Cardiac septum (tissue), 1 donor: ENCODE measurements at regions of chr2 and their contacts with region 1.

Region 1: GRCh38 chr2:26244309-26245121 is at the starts of genes HADHA and HADHB:
- DNase-seq: peak; percentile 95
- total RNA-seq, gene HADHA: 244 TPM
- total RNA-seq, gene HADHB: 532 TPM

Region 2: DNA sequence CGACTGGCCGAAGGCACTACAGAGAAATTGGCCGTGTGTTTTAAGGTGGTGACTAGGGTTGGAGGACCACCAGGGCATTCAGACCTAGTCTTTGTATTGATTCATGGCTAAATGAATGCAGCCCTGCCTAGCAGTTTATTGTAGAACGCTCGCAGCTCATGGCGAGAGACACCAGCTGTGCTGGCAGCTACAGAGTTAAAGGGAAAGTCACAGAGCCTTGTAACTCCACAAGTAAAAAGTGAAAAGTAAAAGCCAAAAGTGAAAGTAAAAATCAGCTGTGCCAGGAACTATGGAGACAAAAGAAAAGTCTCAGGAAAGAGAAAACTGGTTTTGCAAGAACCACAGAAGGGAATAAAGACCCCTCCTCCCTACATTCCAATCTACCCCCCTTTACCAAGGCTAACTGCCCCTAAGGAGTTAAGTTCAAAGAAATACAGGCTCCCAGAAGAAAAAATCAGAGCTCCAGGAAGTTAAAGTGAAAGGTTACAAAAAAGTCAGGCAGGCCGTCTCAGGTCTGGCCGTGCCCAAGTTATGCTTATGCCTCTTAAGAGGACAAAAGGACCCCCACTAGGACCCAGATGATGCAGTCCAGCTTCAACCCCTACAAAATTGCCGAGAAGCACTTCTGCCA is 55.1 kb after region 1 on chr2:
- intact Hi-C with region 1: loop called (anchors 2 kb)
- DNase-seq: no peak

Region 3: DNA sequence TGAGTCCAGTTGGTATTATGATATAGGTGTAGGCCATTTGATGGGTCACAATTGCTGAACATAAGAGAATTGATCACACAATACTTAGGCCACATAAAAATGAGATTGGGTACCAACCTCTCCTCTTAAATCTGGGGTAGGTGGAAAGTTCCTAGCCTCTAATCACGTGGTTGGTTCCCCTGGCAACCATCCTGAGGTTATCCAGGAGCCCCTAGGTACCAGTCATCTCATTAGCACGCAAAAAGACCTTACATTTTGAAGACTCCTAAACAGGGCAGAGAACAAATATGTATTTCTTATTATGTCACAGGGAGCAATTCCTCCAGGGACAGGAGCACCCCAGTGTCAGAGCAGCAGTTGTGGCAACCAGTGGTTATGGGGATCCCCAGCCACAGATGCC is 88.8 kb after region 1 on chr2:
- intact Hi-C with region 1: no loop called
- DNase-seq: no peak